ENCODE measurements at regions of chr4 and their contacts with region 1.

Region 1: GRCh38 chr4:53205970-53206369 is 159.9 kb downstream of the SCFD2 start:
- DNase-seq: peak; percentile 36
- ATAC-seq: no peak
- H3K4me3 ChIP-seq: no peak overlapping the region
- H3K27ac ChIP-seq: no peak overlapping the region
- H3K4me1 ChIP-seq: no peaks in the 10 kb centered on the region
- H3K27me3 ChIP-seq: no peaks in the 10 kb centered on the region
- CTCF ChIP-seq: no peak
- POLR2A ChIP-seq: no peak
- RAD21 ChIP-seq: no peak

Region 2: DNA sequence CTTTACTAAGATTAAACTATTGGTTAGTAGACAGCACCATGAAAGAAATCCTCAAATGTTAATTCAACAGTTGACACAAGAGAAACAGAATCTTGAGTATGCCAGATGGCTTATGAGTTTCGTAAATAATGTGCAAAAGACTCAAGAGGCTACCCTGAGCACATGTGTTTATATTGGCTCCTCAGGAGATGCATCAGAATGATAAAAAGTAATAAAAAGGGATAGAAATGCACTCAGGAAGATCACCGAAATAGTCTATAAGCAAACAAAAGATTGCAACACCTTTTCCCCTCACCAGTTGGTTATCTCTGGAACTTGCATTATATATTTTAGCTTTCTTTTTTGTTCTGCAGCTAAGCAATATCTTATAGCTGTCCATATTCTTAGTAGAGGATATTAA is 75.5 kb after region 1 on chr4:
- CTCF ChIA-PET with region 1: no interaction called
- POLR2A ChIA-PET with region 1: no interaction called
- dilution Hi-C with region 1: no loop called
- in situ Hi-C with region 1: no loop called
- intact Hi-C with region 1: loop called (anchors 5 kb)
- DNase-seq: peak; percentile 67
- ATAC-seq: peak; percentile 60
- H3K4me3 ChIP-seq: no peak overlapping the region
- H3K27ac ChIP-seq: no peak overlapping the region
- H3K4me1 ChIP-seq: peaks cover 12% of the 10 kb centered on the region; the same call in 1 of the 2 replicates
- H3K27me3 ChIP-seq: no peaks in the 10 kb centered on the region
- CTCF ChIP-seq: no peak
- POLR2A ChIP-seq: no peak
- RAD21 ChIP-seq: no peak

Region 3: GRCh38 chr4:53307819-53308780 is 102.1 kb after region 1 on chr4:
- CTCF ChIA-PET with region 1: no interaction called
- POLR2A ChIA-PET with region 1: no interaction called
- dilution Hi-C with region 1: no loop called
- in situ Hi-C with region 1: no loop called
- intact Hi-C with region 1: loop called (anchors 5 kb)
- DNase-seq: peak; percentile 9
- ATAC-seq: no peak; the same call in 1 of the 2 replicates
- H3K4me3 ChIP-seq: no peak overlapping the region
- H3K27ac ChIP-seq: no peak overlapping the region
- H3K4me1 ChIP-seq: peaks cover 5% of the 10 kb centered on the region; the same call in 1 of the 2 replicates
- H3K27me3 ChIP-seq: no peaks in the 10 kb centered on the region
- CTCF ChIP-seq: no peak
- POLR2A ChIP-seq: no peak
- RAD21 ChIP-seq: no peak

Region 4: GRCh38 chr4:53490965-53491622 is 285.1 kb after region 1 on chr4:
- CTCF ChIA-PET with region 1: no interaction called
- POLR2A ChIA-PET with region 1: no interaction called
- dilution Hi-C with region 1: no loop called
- in situ Hi-C with region 1: no loop called
- intact Hi-C with region 1: no loop called
- DNase-seq: peak; percentile 93
- ATAC-seq: peak; percentile 80
- H3K4me3 ChIP-seq: no peak overlapping the region
- H3K27ac ChIP-seq: peak overlapping the region; percentile 93; the same call in 1 of the 2 replicates
- H3K4me1 ChIP-seq: peaks cover 11% of the 10 kb centered on the region
- H3K27me3 ChIP-seq: no peaks in the 10 kb centered on the region
- CTCF ChIP-seq: peak; percentile 71
- POLR2A ChIP-seq: no peak
- RAD21 ChIP-seq: peak; percentile 70